Aorta (tissue), 5 donors: ENCODE measurements at regions of chr11 and their contacts with region 1.

Region 1: GRCh38 chr11:72144807-72145560 is 9.5 kb downstream of the FOLR3 start:
- DNase-seq: no peak
- ATAC-seq: no peak
- H3K4me3 ChIP-seq: no peak overlapping the region
- H3K27ac ChIP-seq: no peak overlapping the region
- H3K4me1 ChIP-seq: no peaks in the 10 kb centered on the region
- H3K27me3 ChIP-seq: no peaks in the 10 kb centered on the region

Region 2: GRCh38 chr11:72024069-72024754 is 120.8 kb before region 1 on chr11:
- intact Hi-C with region 1: loop called in 1 of 2 experiments (anchors 2 kb)
- DNase-seq: no peak
- ATAC-seq: no peak
- H3K4me3 ChIP-seq: no peak overlapping the region
- H3K27ac ChIP-seq: no peak overlapping the region
- H3K4me1 ChIP-seq: no peaks in the 10 kb centered on the region
- H3K27me3 ChIP-seq: no peaks in the 10 kb centered on the region

Region 3: DNA sequence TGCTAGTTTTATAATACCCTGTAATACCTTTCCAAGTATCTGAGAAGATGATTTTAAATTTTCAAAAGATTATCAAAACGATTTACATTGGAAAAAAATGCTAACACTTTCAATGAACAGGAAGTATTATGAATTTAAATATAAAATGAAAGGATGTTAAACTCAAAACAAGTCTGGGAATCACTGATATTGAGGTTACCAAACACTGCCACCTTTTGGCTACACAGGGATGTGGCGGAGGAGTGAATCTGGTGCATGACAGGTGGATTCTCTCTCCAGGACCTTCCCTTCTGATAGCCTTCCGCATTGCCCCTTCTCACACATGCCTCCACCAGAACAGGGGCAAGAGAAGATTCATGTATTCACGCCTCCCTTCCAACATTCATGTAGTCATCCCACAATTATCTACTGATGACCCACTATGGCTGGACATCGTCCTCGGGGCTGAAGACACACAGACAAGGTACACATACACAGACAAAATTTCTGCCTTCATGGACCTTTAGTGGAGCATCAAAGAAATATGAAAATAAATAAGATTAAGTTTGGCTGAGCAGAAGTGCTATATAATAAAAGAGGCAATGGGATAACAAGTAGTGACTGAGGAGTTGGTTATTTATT is 704.0 kb after region 1 on chr11:
- intact Hi-C with region 1: no loop called
- DNase-seq: peak in 1 of 2 donors; percentile 24
- ATAC-seq: peak; percentile 72
- H3K4me3 ChIP-seq: no peak overlapping the region
- H3K27ac ChIP-seq: no peak overlapping the region
- H3K4me1 ChIP-seq: peaks cover 0 to 2% of the 10 kb centered on the region in 2 donors
- H3K27me3 ChIP-seq: no peaks in the 10 kb centered on the region